Activated CD4-positive, alpha-beta memory T cell treated with anti-CD3 and anti-CD28 coated beads for 36 hours (primary cell): ENCODE measurements at regions of chr12 and their contacts with region 1.

Region 1: GRCh38 chr12:68119724-68120211 is 39.8 kb downstream of the IFNG start:
- DNase-seq: peak; percentile 89
- H3K4me3 Mint-ChIP-seq: peak overlapping the region; percentile 27
- H3K27ac Mint-ChIP-seq: peak overlapping the region; percentile 74
- H3K4me1 Mint-ChIP-seq: peaks cover 31% of the 10 kb centered on the region
- H3K27me3 Mint-ChIP-seq: peaks cover 3% of the 10 kb centered on the region

Region 2: DNA sequence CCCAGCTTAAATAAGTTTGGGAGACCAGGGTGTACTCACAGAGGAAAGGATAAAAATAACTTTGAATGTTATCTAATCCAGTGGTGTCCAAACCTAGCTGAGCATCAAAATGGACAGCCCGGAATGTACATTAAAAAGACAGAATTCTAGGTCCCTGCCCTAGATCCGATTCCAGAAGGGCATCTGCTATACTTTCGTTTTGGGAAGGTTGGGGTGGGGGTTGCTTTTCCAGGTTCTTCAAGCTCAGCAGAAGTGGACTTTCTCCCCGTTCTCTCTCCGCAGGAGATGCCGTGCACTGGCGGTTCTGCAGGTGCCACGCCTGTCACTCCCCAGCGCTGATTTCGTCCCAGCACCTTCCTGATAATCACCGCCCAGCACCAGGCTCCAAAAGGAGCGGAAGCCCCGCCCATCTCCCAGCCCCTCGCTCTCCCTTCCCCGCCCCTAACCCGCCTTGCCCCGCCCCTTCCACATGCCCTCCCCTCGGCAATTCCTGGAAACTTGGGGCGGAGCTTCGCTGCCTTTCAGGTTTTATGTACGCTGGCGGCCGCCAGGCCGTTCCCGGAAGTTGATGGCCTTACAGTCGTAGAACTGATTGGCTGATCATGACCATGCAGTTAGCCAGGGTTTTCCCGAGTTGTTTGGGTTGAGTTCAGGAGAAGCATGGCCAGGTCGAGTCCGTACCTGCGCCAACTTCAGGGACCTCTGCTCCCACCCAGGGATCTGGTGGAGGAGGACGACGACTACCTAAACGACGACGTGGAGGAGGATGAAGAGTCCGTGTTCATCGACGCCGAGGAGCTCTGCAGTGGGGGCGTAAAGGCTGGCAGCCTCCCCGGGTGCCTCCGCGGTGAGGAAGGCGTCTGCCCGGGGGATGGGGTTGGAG is 1817.6 kb before region 1 on chr12 and contains the start of gene HELB:
- CTCF ChIA-PET with region 1: no interaction called
- POLR2A ChIA-PET with region 1: no interaction called
- intact Hi-C with region 1: loop called (anchors 10 kb)
- DNase-seq: peak; percentile 99
- H3K4me3 Mint-ChIP-seq: peak within 1 kb of the TSS; percentile 99
- H3K27ac Mint-ChIP-seq: peak within 1 kb of the TSS; percentile 99
- H3K4me1 Mint-ChIP-seq: peaks cover 39% of the 10 kb centered on the region
- H3K27me3 Mint-ChIP-seq: no peaks in the 10 kb centered on the region
- total RNA-seq, gene HELB: 20.8 to 21.8 TPM

Region 3: GRCh38 chr12:68040450-68041075 is 79.2 kb before region 1 on chr12:
- CTCF ChIA-PET with region 1: interaction called, 33 read pairs
- POLR2A ChIA-PET with region 1: interaction called, 4 read pairs
- intact Hi-C with region 1: loop called (anchors 1 kb)
- DNase-seq: peak; percentile 71
- H3K4me3 Mint-ChIP-seq: no peak overlapping the region
- H3K27ac Mint-ChIP-seq: peak overlapping the region; percentile 66
- H3K4me1 Mint-ChIP-seq: peaks cover 51% of the 10 kb centered on the region
- H3K27me3 Mint-ChIP-seq: no peaks in the 10 kb centered on the region

Region 4: GRCh38 chr12:68158432-68158831 is 38.7 kb after region 1 on chr12:
- CTCF ChIA-PET with region 1: interaction called, 189 read pairs
- POLR2A ChIA-PET with region 1: interaction called, 58 read pairs
- intact Hi-C with region 1: loop called (anchors 1 kb)
- DNase-seq: no peak
- H3K4me3 Mint-ChIP-seq: peak overlapping the region; percentile 74
- H3K27ac Mint-ChIP-seq: peak overlapping the region; percentile 83
- H3K4me1 Mint-ChIP-seq: peaks cover 45% of the 10 kb centered on the region
- H3K27me3 Mint-ChIP-seq: no peaks in the 10 kb centered on the region

Region 5: GRCh38 chr12:68189821-68190242 is 70.1 kb after region 1 on chr12:
- CTCF ChIA-PET with region 1: no interaction called
- POLR2A ChIA-PET with region 1: interaction called, 5 read pairs
- intact Hi-C with region 1: loop called (anchors 2 kb)
- DNase-seq: peak; percentile 59
- H3K4me3 Mint-ChIP-seq: no peak overlapping the region
- H3K27ac Mint-ChIP-seq: no peak overlapping the region
- H3K4me1 Mint-ChIP-seq: peaks cover 15% of the 10 kb centered on the region
- H3K27me3 Mint-ChIP-seq: peaks cover 2% of the 10 kb centered on the region

Region 6: DNA sequence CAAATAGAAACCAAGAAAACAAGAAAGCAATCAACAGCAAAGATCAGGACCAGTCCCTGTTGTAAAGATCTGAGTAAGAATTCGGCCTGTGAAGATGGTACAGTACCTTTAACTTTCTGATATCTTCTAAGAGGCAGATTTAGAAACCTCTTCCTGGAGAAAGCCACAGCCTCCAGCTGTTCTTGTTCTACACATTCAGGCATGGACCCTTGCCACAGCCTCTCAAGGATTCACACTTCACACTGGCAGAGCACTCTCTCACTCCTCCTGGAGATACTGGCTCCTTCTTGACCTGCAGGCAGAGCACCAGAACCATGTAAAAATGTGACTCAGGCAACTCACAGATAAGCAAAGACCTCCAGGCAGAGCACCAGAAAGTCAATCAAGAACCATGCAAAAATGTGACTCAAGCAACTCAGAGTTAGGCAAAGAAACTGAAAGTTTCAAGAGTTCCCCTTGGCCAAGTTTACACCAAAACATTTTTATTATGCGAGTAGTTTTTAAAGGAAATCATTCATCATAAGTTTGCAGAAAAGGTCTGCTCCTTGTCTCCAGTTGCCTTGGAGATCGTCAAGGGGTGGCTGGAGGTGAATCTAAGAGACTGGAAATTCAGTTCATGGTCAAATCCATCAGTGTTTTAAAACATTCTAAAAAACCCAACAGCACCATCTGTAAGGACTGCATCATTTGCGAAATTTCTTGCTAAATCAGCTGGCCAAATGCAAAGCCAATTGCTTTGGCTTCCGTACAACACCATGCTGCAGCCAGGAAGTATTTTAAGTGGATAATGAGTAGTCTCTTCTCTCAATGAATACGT is 331.7 kb after region 1 on chr12:
- CTCF ChIA-PET with region 1: no interaction called
- POLR2A ChIA-PET with region 1: no interaction called
- intact Hi-C with region 1: loop called (anchors 1 kb)
- DNase-seq: peak; percentile 70
- H3K4me3 Mint-ChIP-seq: peak overlapping the region; percentile 33
- H3K27ac Mint-ChIP-seq: peak overlapping the region; percentile 95
- H3K4me1 Mint-ChIP-seq: peaks cover 85% of the 10 kb centered on the region
- H3K27me3 Mint-ChIP-seq: no peaks in the 10 kb centered on the region